GM18951 (cell line): ENCODE measurements at regions of chr16 and their contacts with region 1.

Region 1: GRCh38 chr16:81723098-81723723 is 55.9 kb upstream of the PLCG2 start:
- POLR2A ChIP-seq: no peak

Region 2: GRCh38 chr16:81243942-81244341 is 479.3 kb before region 1 on chr16:
- in situ Hi-C with region 1: no loop called
- POLR2A ChIP-seq: no peak

Region 3: GRCh38 chr16:81366316-81366932 is 356.8 kb before region 1 on chr16:
- in situ Hi-C with region 1: loop called (anchors 10 kb)
- POLR2A ChIP-seq: no peak

Region 4: GRCh38 chr16:81403616-81404373 is 319.4 kb before region 1 on chr16:
- in situ Hi-C with region 1: loop called (anchors 10 kb)
- POLR2A ChIP-seq: no peak

Region 5: DNA sequence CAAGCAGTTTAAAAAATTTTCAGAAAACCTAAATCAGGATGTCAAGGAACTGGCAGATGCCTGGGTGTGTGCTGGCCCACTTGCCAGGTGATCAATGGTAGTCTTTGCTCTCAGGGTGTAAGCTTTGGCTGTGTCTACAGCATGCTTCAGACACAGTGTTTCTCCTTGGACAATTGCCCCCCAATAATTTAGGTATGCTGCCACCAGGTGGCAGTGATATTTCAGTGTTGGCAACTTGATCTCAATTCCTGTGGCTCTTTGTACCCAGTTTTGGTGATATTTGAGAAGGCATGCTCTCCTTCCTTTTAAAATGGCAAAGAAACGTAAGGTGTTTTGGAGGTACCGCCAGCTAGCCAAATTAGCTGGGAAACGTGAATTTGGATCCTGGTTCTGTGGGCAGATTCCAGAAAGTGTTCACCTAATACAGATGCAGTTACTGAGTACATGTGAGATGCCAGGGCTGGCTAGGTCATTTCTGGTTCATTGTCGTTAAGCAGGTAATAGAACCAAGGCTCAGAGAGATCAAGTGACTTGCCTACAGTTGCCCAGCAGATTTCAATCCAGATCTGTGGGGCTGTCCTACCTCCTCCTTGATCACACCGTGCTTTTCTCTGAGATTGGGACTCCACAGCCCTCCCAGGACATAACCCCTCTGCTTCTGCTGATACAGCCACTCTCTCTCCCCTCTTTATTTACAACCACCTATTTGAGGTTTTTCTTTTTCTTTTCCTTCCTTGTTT is 99.7 kb before region 1 on chr16:
- in situ Hi-C with region 1: loop called (anchors 10 kb)
- POLR2A ChIP-seq: no peak